ENCODE measurements at regions of chr3 and their contacts with region 1.

Region 1: GRCh38 chr3:44712455-44713075 is at the start of gene ZNF502:
- DNase-seq: peak; percentile 4
- H3K4me3 Mint-ChIP-seq: peak within 1 kb of the TSS; percentile 84
- H3K27ac Mint-ChIP-seq: no peak within 1 kb of the TSS
- H3K4me1 Mint-ChIP-seq: peaks cover 5% of the 10 kb centered on the region
- H3K27me3 Mint-ChIP-seq: peaks cover 3% of the 10 kb centered on the region
- total RNA-seq, gene ZNF502: 0.54 and 0.73 TPM in 2 replicates

Region 2: DNA sequence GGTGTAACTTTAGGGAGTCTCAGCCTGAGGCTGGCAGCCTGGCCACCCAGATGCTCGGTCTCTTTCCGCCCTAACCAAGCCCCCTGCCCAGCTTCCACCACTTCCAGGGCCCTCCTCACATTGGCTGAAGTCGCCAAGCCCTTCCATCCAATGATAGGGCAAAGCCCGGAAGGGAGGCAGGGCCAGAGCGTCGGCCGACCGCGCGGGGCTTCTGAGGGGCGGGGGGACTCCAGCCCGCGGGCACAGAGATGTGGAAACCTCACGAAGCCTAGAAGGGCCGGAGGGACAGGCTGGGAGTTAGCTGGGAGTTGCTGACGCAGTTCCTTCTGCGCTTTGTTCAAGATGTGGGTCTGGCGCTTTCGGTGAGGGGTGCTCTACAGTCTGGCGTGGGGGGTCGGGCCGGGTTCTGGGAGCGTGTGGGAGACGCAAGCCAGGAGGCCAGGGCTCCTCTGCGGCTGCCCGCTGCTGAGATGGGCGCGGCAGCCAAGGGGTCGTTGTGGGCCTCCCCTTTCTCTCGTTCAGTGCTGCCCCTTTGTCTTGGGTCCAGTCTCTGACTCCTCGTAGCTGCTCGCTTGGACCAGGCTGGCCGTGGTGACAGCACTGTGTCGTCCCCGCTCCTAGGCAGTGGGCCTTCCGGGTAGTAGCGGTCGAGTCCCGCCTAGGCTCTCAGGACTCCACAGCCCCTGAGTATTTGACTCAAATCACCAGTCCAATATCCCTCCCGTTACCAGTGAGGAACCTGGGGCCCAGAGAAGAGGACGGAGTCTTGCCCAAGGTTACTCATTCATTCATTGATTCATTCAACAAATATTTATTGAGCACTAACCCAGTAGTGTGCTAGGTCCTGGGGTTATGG is 127.7 kb before region 1 on chr3 and contains the start of gene ZNF660:
- intact Hi-C with region 1: loop called (anchors 10 kb)
- DNase-seq: no peak
- H3K4me3 Mint-ChIP-seq: peak within 1 kb of the TSS; percentile 30
- H3K27ac Mint-ChIP-seq: no peak within 1 kb of the TSS
- H3K4me1 Mint-ChIP-seq: no peaks in the 10 kb centered on the region
- H3K27me3 Mint-ChIP-seq: peaks cover 18% of the 10 kb centered on the region
- total RNA-seq, gene ZNF660: 0.21 TPM in 1 of 2 replicates, not detected in the other